Activated CD4-positive, alpha-beta T cell treated with anti-CD3 and anti-CD28 coated beads for 36 hours (primary cell): ENCODE measurements at regions of chr3 and their contacts with region 1.

Region 1: DNA sequence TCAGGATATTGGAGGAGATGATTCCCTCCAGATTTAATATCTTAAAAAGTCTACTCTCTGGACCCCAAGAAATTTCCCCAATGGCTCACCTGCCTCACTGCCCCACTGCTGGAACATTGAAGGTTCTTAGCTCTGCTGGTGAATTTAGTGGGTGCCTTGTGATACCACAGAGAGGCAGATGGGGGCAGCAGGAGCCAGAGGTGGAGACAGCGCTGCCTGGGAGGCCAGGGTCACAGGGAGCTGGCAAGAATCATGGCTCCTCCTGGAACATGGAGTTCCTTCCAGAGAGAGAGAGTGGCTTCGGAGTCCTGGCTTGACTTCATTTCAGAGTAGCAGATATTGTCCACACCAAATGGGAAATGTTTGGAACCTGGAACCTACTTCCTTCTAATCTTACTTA is 263.5 kb upstream of the CFAP20DC start:
- DNase-seq: peak; percentile 74
- ATAC-seq: peak; percentile 86
- H3K4me3 Mint-ChIP-seq: no peak overlapping the region
- H3K27ac Mint-ChIP-seq: no peak overlapping the region
- H3K4me1 Mint-ChIP-seq: peaks cover 17% of the 10 kb centered on the region
- H3K27me3 Mint-ChIP-seq: no peaks in the 10 kb centered on the region

Region 2: GRCh38 chr3:59212128-59212779 is 101.1 kb before region 1 on chr3:
- CTCF ChIA-PET with region 1: interaction called, 5 read pairs
- POLR2A ChIA-PET with region 1: interaction called, 4 read pairs
- intact Hi-C with region 1: loop called in 1 of 2 experiments (anchors 5 kb)
- DNase-seq: no peak
- ATAC-seq: peak; percentile 74
- H3K4me3 Mint-ChIP-seq: no peak overlapping the region
- H3K27ac Mint-ChIP-seq: no peak overlapping the region
- H3K4me1 Mint-ChIP-seq: peaks cover 6% of the 10 kb centered on the region
- H3K27me3 Mint-ChIP-seq: peaks cover 12% of the 10 kb centered on the region

Region 3: GRCh38 chr3:59277816-59278215 is 35.5 kb before region 1 on chr3:
- CTCF ChIA-PET with region 1: no interaction called
- POLR2A ChIA-PET with region 1: no interaction called
- intact Hi-C with region 1: no loop called
- DNase-seq: no peak
- ATAC-seq: no peak
- H3K4me3 Mint-ChIP-seq: no peak overlapping the region
- H3K27ac Mint-ChIP-seq: no peak overlapping the region
- H3K4me1 Mint-ChIP-seq: no peaks in the 10 kb centered on the region
- H3K27me3 Mint-ChIP-seq: no peaks in the 10 kb centered on the region

Region 4: GRCh38 chr3:59502806-59503205 is 189.4 kb after region 1 on chr3:
- CTCF ChIA-PET with region 1: no interaction called
- POLR2A ChIA-PET with region 1: no interaction called
- intact Hi-C with region 1: loop called in 1 of 2 experiments (anchors 5 kb)
- DNase-seq: peak; percentile 71
- ATAC-seq: peak; percentile 97
- H3K4me3 Mint-ChIP-seq: no peak overlapping the region
- H3K27ac Mint-ChIP-seq: no peak overlapping the region
- H3K4me1 Mint-ChIP-seq: peaks cover 10% of the 10 kb centered on the region
- H3K27me3 Mint-ChIP-seq: no peaks in the 10 kb centered on the region

Region 5: GRCh38 chr3:59575113-59576001 is 262.0 kb after region 1 on chr3:
- CTCF ChIA-PET with region 1: interaction called, 5 read pairs
- POLR2A ChIA-PET with region 1: no interaction called
- intact Hi-C with region 1: loop called in 1 of 2 experiments (anchors 2 kb)
- DNase-seq: peak; percentile 92
- ATAC-seq: peak; percentile 86
- H3K4me3 Mint-ChIP-seq: no peak overlapping the region
- H3K27ac Mint-ChIP-seq: no peak overlapping the region
- H3K4me1 Mint-ChIP-seq: peaks cover 3% of the 10 kb centered on the region
- H3K27me3 Mint-ChIP-seq: peaks cover 2% of the 10 kb centered on the region

Region 6: DNA sequence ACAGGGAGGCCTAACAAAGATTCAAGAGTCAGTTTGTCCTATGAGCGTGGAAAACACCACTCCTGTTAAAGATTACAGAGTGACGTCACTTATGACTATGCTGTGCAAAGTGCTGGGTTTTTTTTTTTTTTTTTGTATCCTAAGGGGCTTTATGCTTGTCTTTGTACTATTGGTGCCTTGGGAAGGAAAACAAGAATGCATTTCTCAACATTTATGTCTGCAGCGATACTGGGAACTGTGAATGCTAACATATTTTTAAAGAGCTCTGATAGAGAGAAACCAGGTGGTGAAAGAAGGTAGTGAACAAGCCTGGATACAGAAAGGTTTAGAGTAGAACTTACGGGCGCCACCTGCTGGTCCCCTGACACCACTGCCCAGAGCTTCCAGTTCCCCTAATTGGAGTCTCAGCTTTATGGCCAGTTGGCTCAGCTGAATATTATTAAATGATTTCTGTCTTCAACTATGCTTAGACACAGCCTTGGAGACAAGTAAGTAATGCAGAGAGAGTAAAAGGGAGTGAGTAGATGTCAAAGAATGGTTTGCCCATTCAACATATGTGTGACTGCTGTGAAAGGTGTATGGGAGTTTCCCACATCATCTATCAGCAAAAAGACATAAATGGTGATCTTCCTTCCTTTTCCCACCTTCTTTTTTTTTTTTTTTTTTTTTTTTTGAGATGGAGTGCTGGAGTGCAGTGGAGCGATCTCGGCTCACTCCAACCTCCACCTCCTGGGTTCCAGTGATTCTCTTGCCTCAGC is 544.4 kb after region 1 on chr3:
- CTCF ChIA-PET with region 1: interaction called, 3 read pairs
- POLR2A ChIA-PET with region 1: no interaction called
- intact Hi-C with region 1: loop called (anchors 1 to 10 kb)
- DNase-seq: peak; percentile 89
- ATAC-seq: peak; percentile 97
- H3K4me3 Mint-ChIP-seq: peak overlapping the region; percentile 27
- H3K27ac Mint-ChIP-seq: peak overlapping the region; percentile 47
- H3K4me1 Mint-ChIP-seq: peaks cover 18% of the 10 kb centered on the region
- H3K27me3 Mint-ChIP-seq: no peaks in the 10 kb centered on the region